ENCODE measurements at regions of chr14 and their contacts with region 1.

Region 1: GRCh38 chr14:69685716-69686115 is 74.3 kb downstream of the SUSD6 start:
- DNase-seq: no peak
- H3K4me3 ChIP-seq: no peak overlapping the region
- H3K4me3 Mint-ChIP-seq: peak overlapping the region in 7 of 8 donors; percentile 11 to 74 (median 57)
- H3K27ac ChIP-seq: peak overlapping the region; percentile 20
- H3K27ac Mint-ChIP-seq: peak overlapping the region in 6 of 7 donors; percentile 17 to 89 (median 71)
- H3K4me1 ChIP-seq: peaks cover 72% of the 10 kb centered on the region
- H3K4me1 Mint-ChIP-seq: peaks cover 64 to 94% (median 81%) of the 10 kb centered on the region in 4 donors
- H3K27me3 ChIP-seq: no peaks in the 10 kb centered on the region
- H3K27me3 Mint-ChIP-seq: no peaks in the 10 kb centered on the region

Region 2: DNA sequence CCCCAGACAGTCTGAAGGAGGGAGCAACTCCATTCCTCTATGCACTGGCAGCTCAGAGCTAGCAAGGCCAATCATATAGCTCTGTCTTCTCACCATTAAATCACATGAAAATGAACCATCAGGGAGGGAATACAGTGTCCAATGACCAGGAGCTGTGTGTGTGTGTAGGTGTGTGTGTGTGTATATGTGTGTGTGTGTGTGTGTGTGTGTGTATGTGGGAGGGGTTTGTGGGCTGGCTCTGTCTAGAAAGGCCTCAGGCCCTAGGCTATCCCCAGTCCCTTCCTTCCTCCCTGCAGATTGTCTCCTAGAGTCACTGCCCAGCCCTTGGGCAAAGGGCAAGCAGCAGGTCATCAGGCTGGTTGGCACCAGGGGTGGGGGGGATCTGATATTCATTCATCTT is 80.0 kb before region 1 on chr14:
- CTCF ChIA-PET with region 1: interaction called, 12 read pairs
- POLR2A ChIA-PET with region 1: interaction called, 19 read pairs
- intact Hi-C with region 1: no loop called
- DNase-seq: no peak
- H3K4me3 ChIP-seq: no peak overlapping the region
- H3K4me3 Mint-ChIP-seq: no peak overlapping the region
- H3K27ac ChIP-seq: no peak overlapping the region
- H3K27ac Mint-ChIP-seq: no peak overlapping the region
- H3K4me1 ChIP-seq: peaks cover 12% of the 10 kb centered on the region
- H3K4me1 Mint-ChIP-seq: peaks cover 10 to 22% (median 16%) of the 10 kb centered on the region in 4 donors
- H3K27me3 ChIP-seq: no peaks in the 10 kb centered on the region
- H3K27me3 Mint-ChIP-seq: no peaks in the 10 kb centered on the region

Measured in CD4-positive, alpha-beta memory T cell (primary cell).